HCT116 (cell line): ENCODE measurements at regions of chr4 and their contacts with region 1.

Region 1: GRCh38 chr4:163494360-163495162 is at the start of gene TMA16:
- DNase-seq: peak; percentile 93
- ATAC-seq: peak; percentile 88
- H3K4me3 ChIP-seq: peak within 1 kb of the TSS; percentile 87 to 95
- H3K27ac ChIP-seq: peak within 1 kb of the TSS; percentile 93
- H3K4me1 ChIP-seq: peaks cover 6 to 22% of the 10 kb centered on the region in 2 experiments; a peak in 3 of 4 replicates
- H3K27me3 ChIP-seq: no peaks in the 10 kb centered on the region
- CTCF ChIP-seq: no peak
- POLR2A ChIP-seq: peak; percentile 87
- RAD21 ChIP-seq: no peak
- total RNA-seq, gene TMA16: 52.7 TPM

Region 2: GRCh38 chr4:163166041-163166579 is 328.5 kb before region 1 on chr4:
- CTCF ChIA-PET with region 1: no interaction called
- POLR2A ChIA-PET with region 1: interaction called, 3 read pairs
- RAD21 ChIA-PET with region 1: no interaction called
- intact Hi-C with region 1: loop called (anchors 5 kb)
- DNase-seq: no peak
- ATAC-seq: peak; percentile 59
- H3K4me3 ChIP-seq: peak overlapping the region; percentile 79
- H3K27ac ChIP-seq: peak overlapping the region; percentile 47; the same call in 1 of the 2 replicates
- H3K4me1 ChIP-seq: peaks cover 0 to 33% of the 10 kb centered on the region in 2 experiments; a peak in 2 of 4 replicates
- H3K27me3 ChIP-seq: no peaks in the 10 kb centered on the region
- CTCF ChIP-seq: no peak
- POLR2A ChIP-seq: no peak
- RAD21 ChIP-seq: no peak

Region 3: DNA sequence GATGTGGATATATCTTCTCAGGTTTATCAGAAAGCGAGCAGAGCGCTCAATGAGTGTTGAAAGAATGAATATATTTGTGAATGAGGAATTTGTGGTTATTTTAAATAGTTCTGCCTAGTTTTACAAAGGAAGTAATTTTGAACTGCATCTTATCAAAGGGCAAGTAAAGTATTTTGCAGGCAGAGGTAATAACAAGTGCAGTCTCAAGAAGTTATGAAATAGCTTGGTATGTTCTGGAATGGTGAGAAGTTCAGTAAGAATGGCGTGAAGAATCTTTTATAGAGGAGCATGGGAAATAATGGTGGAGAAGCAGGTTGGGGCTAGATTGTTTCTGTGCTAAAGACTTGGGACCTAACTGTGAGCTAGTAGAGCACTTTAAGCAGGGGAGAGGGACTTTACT is 10.8 kb after region 1 on chr4:
- CTCF ChIA-PET with region 1: no interaction called
- POLR2A ChIA-PET with region 1: interaction called, 14 read pairs
- RAD21 ChIA-PET with region 1: no interaction called
- intact Hi-C with region 1: no loop called
- DNase-seq: no peak
- ATAC-seq: no peak
- H3K4me3 ChIP-seq: no peak overlapping the region
- H3K27ac ChIP-seq: no peak overlapping the region
- H3K4me1 ChIP-seq: no peaks in the 10 kb centered on the region
- H3K27me3 ChIP-seq: no peaks in the 10 kb centered on the region
- CTCF ChIP-seq: no peak
- POLR2A ChIP-seq: no peak
- RAD21 ChIP-seq: no peak